Mammary epithelial cell (primary cell): ENCODE measurements at regions of chrX and their contacts with region 1.

Region 1: GRCh38 chrX:21870494-21870893 is 14.7 kb downstream of the YY2 start:
- DNase-seq: no peak
- H3K4me3 ChIP-seq: no peak overlapping the region
- H3K27ac ChIP-seq: no peak overlapping the region
- H3K4me1 ChIP-seq: no peaks in the 10 kb centered on the region
- H3K27me3 ChIP-seq: no peaks in the 10 kb centered on the region
- CTCF ChIP-seq: no peak

Region 2: DNA sequence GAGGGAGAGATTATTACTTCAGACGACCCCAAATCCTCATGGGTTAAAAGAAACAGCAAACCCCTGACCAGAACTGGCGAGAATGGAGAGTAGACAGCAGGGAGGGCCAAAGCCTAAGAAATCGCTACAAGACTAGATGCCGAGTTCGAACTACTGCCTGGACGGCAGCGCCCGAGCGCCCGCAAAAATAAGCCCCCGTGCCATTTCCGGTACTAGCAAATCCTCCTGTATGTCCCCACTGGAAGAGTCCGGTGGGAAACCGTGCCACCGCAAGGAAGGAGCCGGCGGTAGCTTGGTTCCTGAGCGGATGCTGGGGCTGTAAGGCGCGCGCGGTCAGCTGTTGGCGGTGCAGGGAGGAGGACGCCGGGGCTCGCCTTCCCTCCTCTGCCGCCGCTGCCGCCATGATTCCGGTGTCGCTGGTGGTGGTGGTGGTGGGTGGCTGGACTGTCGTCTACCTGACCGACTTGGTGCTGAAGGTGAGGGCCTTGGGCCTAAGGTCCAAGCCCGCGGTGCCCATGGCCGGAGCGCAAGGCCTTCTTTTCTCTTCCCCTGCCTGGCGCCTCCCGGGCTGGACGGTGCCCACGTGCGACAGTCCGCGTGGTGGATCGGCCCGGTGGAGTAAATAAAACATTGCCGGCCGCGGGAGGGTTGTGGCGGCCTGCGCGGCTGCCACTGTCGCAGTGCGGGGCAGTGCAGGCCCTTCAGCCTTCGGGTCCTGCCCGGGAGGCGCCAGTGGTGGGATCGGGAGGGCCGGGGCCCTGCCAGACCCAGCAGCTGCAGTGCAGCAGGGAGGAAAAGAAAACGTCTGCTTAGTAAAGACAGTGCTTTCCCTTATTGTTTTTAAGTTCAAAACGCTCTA is 30.9 kb before region 1 on chrX and contains the start of gene MBTPS2:
- CTCF ChIA-PET with region 1: no interaction called
- dilution Hi-C with region 1: no loop called
- in situ Hi-C with region 1: no loop called
- intact Hi-C with region 1: no loop called
- DNase-seq: peak; percentile 79
- H3K4me3 ChIP-seq: peak within 1 kb of the TSS; percentile 49 to 76 (median 72)
- H3K27ac ChIP-seq: peak within 1 kb of the TSS; percentile 61
- H3K4me1 ChIP-seq: no peaks in the 10 kb centered on the region
- H3K27me3 ChIP-seq: peaks cover 2% of the 10 kb centered on the region
- CTCF ChIP-seq: peak in 1 of 2 donors; percentile 14
- total RNA-seq, gene MBTPS2: 6.8 to 18.5 TPM

Region 3: GRCh38 chrX:23505531-23506303 is 1635.2 kb after region 1 on chrX:
- CTCF ChIA-PET with region 1: interaction called, 15 read pairs
- dilution Hi-C with region 1: no loop called
- in situ Hi-C with region 1: no loop called
- intact Hi-C with region 1: no loop called
- DNase-seq: no peak
- H3K4me3 ChIP-seq: no peak overlapping the region
- H3K27ac ChIP-seq: no peak overlapping the region
- H3K4me1 ChIP-seq: peaks cover 12% of the 10 kb centered on the region
- H3K27me3 ChIP-seq: no peaks in the 10 kb centered on the region
- CTCF ChIP-seq: no peak